ENCODE measurements at regions of chr13 and their contacts with region 1.

Region 1: DNA sequence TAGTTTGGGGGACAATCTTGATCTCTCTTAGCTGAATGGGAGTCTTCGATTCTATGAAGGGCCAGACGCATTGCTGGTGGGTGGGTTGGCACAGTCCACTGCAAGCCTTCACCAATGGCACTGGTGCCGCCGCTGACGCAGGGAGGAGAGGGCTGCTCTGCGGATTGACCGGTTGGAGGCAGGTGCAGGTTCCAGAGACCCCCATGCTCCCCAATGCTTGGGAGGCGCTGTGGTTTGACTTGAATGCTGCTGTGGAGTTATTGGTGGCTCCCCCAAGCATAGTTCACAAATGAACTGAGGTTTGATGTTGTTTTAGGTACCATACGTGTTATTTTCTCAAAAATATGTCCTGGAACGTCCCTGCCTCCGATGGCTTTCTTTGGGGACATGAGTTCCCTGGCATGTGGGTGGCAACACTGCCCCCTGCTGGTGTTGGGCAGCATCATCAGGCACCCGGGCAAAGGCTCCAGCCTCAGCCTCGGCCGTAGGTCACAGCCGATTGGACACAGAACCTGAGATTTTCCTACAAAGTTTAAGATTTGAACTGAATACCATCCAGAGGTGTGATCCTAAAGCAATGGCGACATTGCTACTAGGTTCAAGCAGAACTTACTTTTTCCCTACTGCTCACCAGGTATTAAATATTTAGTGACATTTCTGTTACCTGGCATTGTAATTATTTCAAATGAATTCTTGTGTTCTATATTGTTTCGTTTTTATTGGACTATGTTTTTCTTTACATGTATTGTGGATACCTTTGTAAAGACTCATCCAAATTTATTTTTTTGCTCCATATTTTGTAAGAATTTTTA is 95.5 kb downstream of the ANKRD10 start:
- DNase-seq: no peak
- H3K4me3 ChIP-seq: no peak overlapping the region
- H3K27ac ChIP-seq: no peak overlapping the region
- H3K4me1 ChIP-seq: peaks cover 4 to 7% (median 6%) of the 10 kb centered on the region in 4 donors
- H3K27me3 ChIP-seq: no peaks in the 10 kb centered on the region
- CTCF ChIP-seq: peak in 2 of 3 experiments; percentile 96 to 99
- EP300 ChIP-seq: no peak
- POLR2A ChIP-seq: no peak

Region 2: DNA sequence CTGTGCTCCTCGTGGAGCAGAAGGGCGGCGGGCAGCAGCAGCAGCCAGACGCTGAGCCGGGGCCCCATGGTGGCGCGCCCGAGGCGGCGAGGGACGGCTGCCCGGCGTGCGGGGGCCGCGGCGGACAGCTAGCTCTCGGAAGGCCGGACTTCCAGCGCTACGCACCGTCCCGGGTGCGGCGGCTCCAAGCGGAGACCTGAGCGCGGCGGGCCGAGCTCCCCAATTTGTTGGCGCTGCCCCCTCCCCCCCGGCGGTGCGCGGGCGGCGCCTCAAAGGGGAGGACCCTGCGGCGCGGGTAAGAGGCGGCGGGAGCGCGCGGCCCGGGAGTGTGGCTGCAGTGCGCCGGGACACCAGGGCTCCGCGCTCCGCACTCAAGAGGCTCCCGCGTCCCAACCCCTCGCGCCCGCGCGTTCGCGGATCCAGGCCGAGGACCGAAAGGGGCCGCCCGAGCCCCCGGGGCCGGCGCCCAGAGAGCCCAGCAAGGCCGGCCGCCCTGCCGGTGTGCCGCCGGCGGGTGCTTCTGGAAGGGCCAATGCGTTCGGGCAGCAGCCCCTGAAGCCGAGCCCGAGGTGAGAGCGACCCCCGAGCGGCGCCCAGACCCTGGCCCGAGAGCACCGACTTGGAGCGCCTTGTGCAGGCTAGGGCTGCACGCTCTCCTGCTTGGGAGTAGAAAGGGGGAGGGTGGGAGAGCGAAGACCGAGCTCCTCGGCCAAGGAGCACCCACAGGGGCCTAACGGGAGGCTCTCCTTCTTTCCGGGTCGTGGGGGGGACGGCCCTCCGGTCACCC is 512.3 kb before region 1 on chr13 and contains the starts of genes COL4A1 and COL4A2:
- intact Hi-C with region 1: no loop called
- DNase-seq: no peak
- H3K4me3 ChIP-seq: peak within 1 kb of the TSS; percentile 93 to 97 (median 94)
- H3K27ac ChIP-seq: peak within 1 kb of the TSS; percentile 99
- H3K4me1 ChIP-seq: peaks cover 50 to 68% (median 63%) of the 10 kb centered on the region in 4 donors
- H3K27me3 ChIP-seq: peaks cover 0 to 5% (median 2%) of the 10 kb centered on the region in 4 donors
- CTCF ChIP-seq: no peak
- EP300 ChIP-seq: no peak
- POLR2A ChIP-seq: peak; percentile 86
- total RNA-seq, gene COL4A1: 328 to 578 (median 405) TPM
- total RNA-seq, gene COL4A2: 419 to 931 (median 555) TPM

Region 3: GRCh38 chr13:110455941-110456340 is 363.5 kb before region 1 on chr13:
- intact Hi-C with region 1: loop called (anchors 10 kb)
- DNase-seq: no peak
- H3K4me3 ChIP-seq: no peak overlapping the region
- H3K27ac ChIP-seq: peak overlapping the region; percentile 49 to 83 (median 52)
- H3K4me1 ChIP-seq: peaks cover 0 to 27% (median 19%) of the 10 kb centered on the region in 4 donors
- H3K27me3 ChIP-seq: no peaks in the 10 kb centered on the region
- CTCF ChIP-seq: peak; percentile 82 to 87 (median 85)
- EP300 ChIP-seq: no peak
- POLR2A ChIP-seq: no peak

Region 4: GRCh38 chr13:110597041-110597691 is 222.2 kb before region 1 on chr13:
- intact Hi-C with region 1: loop called (anchors 5 kb)
- DNase-seq: no peak
- H3K4me3 ChIP-seq: no peak overlapping the region
- H3K27ac ChIP-seq: no peak overlapping the region
- H3K4me1 ChIP-seq: peaks cover 0 to 10% (median 1%) of the 10 kb centered on the region in 4 donors
- H3K27me3 ChIP-seq: no peaks in the 10 kb centered on the region
- CTCF ChIP-seq: no peak
- EP300 ChIP-seq: no peak
- POLR2A ChIP-seq: no peak

Region 5: DNA sequence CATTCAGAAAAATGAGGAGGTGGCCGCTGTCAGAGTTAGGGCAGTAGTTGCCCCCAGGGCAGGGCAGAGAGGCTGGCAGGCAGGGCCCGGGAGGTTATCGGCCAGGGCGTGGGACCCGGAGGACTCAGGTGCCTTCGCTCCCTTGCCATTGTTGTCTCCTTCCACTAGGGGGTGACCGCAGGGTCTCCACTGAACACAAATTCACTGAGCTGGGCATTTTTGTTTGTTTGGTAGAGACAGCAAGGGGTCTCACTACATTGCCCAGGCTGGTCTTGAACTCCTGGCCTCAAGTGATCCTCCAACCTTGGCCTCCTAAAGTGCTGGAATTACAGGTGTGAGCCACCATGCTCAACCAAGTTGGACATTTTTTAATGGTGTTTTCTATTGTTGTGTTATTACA is 138.6 kb before region 1 on chr13:
- intact Hi-C with region 1: loop called (anchors 5 kb)
- DNase-seq: no peak
- H3K4me3 ChIP-seq: no peak overlapping the region
- H3K27ac ChIP-seq: no peak overlapping the region
- H3K4me1 ChIP-seq: no peaks in the 10 kb centered on the region
- H3K27me3 ChIP-seq: no peaks in the 10 kb centered on the region
- CTCF ChIP-seq: peak in 2 of 3 experiments; percentile 13 to 35
- EP300 ChIP-seq: no peak
- POLR2A ChIP-seq: no peak

Region 6: GRCh38 chr13:110726726-110727125 is 92.7 kb before region 1 on chr13:
- intact Hi-C with region 1: loop called (anchors 10 kb)
- DNase-seq: no peak
- H3K4me3 ChIP-seq: no peak overlapping the region
- H3K27ac ChIP-seq: no peak overlapping the region
- H3K4me1 ChIP-seq: peaks cover 0 to 10% (median 4%) of the 10 kb centered on the region in 4 donors
- H3K27me3 ChIP-seq: no peaks in the 10 kb centered on the region
- CTCF ChIP-seq: no peak
- EP300 ChIP-seq: no peak
- POLR2A ChIP-seq: no peak

Region 7: GRCh38 chr13:110874508-110874960 is 55.1 kb after region 1 on chr13:
- intact Hi-C with region 1: no loop called
- DNase-seq: no peak
- H3K4me3 ChIP-seq: peak overlapping the region; percentile 47 to 55 (median 50)
- H3K27ac ChIP-seq: peak overlapping the region in 3 of 4 donors; percentile 35 to 56 (median 45)
- H3K4me1 ChIP-seq: peaks cover 25 to 41% (median 40%) of the 10 kb centered on the region in 4 donors
- H3K27me3 ChIP-seq: no peaks in the 10 kb centered on the region
- CTCF ChIP-seq: no peak
- EP300 ChIP-seq: no peak
- POLR2A ChIP-seq: no peak

Region 8: DNA sequence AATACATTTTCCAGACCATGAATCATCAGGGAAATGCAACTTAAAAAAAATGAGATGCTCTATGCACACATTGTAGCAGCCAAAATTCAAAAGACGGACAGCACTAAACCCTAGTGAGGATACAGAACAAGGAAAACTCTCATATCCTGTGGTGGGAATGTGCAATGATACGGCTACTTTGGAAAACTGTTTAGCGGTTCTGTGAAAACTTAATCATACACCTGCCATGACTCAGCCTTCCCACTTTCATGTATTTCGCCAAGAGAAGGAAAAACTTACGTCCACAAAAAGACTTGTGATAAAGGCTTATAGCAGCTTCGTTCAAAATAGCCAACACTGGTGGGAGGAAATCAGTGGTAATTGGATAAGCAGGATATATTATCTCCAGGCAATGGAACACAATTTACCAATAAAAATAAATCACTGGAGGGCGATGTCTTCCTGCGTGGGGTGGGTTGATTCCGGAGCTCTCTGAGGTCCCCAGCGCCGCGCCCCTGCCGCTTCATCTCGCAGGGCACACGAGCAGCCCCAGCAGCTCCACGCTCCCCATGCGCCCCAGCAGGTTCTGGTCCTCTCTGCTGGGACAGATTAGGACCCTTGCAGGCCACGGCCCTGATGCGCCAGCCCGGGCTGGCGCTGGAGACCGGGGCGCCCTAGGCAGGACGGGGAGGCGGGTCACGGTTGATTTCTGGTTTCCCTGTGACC is 198.5 kb after region 1 on chr13:
- intact Hi-C with region 1: no loop called
- DNase-seq: no peak
- H3K4me3 ChIP-seq: no peak overlapping the region
- H3K27ac ChIP-seq: no peak overlapping the region
- H3K4me1 ChIP-seq: no peaks in the 10 kb centered on the region
- H3K27me3 ChIP-seq: peaks cover 0 to 7% (median 0%) of the 10 kb centered on the region in 4 donors
- CTCF ChIP-seq: no peak
- EP300 ChIP-seq: no peak
- POLR2A ChIP-seq: no peak